Activated B cell treated with CpG ODN at 0.5 μM for 24 hours (primary cell): ENCODE measurements at regions of chr12 and their contacts with region 1.

Region 1: GRCh38 chr12:55812088-55812487 is 5.4 kb downstream of the SARNP start:
- DNase-seq: no peak
- ATAC-seq: no peak
- H3K4me3 Mint-ChIP-seq: no peak overlapping the region
- H3K27ac Mint-ChIP-seq: no peak overlapping the region
- H3K4me1 Mint-ChIP-seq: peaks cover 32% of the 10 kb centered on the region
- H3K27me3 Mint-ChIP-seq: no peaks in the 10 kb centered on the region
- CTCF ChIP-seq: no peak

Region 2: GRCh38 chr12:56601503-56601902 is 789.4 kb after region 1 on chr12:
- CTCF ChIA-PET with region 1: no interaction called
- POLR2A ChIA-PET with region 1: interaction called, 10 read pairs
- intact Hi-C with region 1: no loop called
- DNase-seq: no peak
- ATAC-seq: peak; percentile 57
- H3K4me3 Mint-ChIP-seq: no peak overlapping the region
- H3K27ac Mint-ChIP-seq: peak overlapping the region; percentile 41
- H3K4me1 Mint-ChIP-seq: no peaks in the 10 kb centered on the region
- H3K27me3 Mint-ChIP-seq: no peaks in the 10 kb centered on the region
- CTCF ChIP-seq: no peak